Right ventricle myocardium inferior (tissue), 1 donor: ENCODE measurements at regions of chr9 and their contacts with region 1.

Region 1: DNA sequence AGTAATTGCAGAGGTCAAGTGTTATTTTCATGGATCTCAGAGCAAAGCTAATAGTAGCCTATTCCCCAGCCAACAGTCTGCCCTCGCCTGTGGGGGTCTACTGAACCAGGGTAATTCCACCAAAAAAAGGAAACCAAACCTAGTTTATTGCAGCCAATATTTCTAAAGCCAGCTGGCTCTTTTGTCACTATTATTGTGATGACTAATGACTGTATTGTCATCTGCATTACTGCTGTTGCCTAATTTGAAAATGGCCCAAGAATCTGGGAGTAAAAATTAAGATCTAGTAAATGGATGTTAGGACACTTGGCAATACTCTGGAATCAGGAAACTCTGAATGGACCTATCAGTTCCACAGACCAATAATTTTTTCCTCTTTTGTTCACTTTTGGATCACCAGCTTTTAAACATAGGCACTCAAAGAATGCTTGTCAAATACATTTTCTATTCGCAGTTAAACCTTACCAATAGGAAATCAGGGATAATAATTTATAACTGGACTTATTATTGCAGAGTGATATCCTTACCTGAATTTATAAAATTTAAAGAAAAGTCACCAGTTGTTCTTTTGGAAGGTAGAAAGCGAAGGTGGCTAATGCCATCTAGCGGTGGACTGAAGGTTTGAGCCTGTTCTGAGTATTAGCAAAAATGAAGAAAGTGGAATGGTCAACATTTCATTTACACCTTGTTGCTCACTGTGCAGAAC is 69.2 kb downstream of the SYK start:
- DNase-seq: no peak
- ATAC-seq: no peak

Region 2: DNA sequence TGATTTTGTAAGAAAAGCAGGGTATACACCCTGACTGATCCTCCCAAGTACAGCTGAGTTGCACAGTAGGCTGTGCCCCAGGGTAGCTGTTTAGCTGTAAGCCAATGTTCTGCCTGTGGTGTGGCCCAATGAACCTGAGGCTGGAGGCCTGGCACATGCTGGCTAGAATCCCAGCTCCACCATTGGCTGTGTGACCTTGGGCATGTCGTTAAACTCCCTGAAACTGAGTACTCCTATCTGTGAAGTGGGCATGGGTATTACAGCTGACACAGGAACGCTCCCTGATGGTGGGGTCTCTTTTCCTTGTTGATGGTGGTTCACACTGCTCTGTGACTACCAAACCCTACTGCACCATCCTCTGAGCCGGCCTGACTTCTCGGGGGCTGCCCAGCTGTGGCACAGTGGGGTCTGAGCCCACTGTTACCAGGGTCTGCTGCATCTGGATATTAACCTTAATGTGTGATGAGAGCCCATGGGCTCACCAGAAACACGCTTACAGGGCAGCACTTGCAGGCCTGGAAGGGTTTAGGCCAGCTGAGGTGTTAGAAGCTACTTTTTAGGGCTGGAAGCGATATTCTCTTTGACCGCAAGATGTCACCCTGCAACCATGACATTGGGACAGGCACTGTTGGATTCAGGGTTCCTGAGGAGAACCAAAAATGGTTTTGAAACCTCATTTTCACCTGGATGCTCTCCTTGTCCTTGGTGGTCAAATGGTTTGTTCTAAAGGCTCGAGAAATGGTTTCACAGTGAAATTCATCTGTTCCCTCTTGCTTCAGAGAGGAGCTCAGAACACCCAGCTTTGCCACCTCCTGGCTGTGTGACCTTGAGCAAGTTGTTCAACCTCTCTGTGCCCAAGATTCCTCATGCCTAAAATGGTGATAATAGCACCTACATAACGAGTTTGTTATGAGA is 1272.8 kb before region 1 on chr9:
- intact Hi-C with region 1: loop called (anchors 5 kb)
- DNase-seq: no peak
- ATAC-seq: peak; percentile 56

Region 3: DNA sequence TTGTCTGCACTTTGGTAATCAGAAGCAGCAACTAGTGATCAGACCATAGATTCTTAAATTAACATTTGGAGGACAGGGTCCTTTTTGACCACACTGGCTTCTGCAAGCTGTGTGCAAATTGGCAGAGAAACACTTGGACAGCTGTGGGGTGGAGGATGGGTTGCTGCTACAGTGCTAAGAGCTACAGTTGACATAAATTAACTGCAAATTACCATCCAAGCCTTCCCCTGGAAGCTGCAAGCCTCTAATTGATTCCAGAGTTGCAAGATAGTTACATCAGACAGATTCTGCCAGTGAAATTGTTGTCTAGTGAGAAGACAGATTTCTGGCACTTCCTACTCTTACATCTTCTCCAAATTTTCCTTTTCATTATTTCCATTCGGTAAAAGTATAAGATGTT is 745.8 kb before region 1 on chr9:
- intact Hi-C with region 1: loop called (anchors 5 kb)
- DNase-seq: no peak
- ATAC-seq: no peak

Region 4: DNA sequence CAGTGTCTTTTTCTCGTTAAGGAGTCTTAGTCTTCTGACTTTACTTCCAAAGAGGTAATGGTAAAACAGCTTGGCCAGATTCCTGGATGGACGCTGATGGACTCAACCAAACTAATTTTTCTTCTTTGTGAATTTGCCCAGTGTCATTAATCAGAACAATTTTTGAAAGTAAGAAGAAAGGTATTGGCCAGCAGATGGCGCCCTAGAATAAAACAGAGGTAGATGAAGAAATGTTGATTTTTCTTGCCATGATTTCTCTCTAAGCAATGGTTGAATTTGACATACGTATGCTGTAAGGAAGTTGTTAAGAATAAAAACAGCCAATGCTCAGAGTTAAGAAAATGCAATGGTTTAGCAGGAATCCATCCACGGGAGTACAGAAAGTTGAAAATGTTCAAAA is 728.2 kb before region 1 on chr9:
- intact Hi-C with region 1: loop called (anchors 2 kb)
- DNase-seq: no peak
- ATAC-seq: no peak

Region 5: DNA sequence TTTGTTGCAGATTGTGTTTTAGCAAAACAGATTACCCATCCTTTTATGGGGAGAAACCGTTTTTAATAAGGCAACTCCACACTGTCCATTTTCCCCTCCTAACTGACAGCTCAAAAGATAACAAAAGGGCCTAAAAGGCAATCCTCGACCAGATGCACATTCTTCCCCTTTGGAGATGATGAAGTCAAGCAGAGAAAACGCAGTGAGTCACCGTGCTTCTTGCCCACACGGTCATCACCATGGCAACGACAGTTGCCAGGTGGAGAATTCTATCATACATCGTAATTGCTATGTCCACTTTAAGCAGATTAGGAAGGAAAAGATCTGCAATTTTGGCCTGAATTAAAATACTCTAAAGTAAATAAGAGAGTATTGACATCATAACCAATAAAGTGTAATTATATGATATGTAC is 324.5 kb before region 1 on chr9:
- intact Hi-C with region 1: no loop called
- DNase-seq: no peak
- ATAC-seq: no peak

Region 6: DNA sequence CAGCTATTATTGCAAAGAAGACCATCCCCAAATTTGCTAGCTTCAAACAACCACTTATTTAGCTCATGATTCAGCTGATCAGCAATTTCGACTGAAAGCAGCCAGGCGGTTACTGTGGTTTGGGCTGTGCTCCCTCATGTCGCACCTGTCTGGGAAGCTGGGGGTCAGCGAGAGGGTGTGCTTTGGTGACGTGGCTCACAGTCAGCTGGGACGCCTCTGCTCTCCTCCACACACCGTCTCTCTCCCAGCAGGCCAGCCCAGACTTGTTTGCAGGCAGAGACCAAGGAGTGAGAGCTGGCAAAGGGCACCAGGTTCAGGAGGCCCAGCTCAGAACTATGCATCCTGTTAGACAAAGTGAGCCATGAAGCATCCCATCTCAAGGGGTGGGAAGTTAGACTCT is 71.8 kb after region 1 on chr9:
- intact Hi-C with region 1: no loop called
- DNase-seq: no peak
- ATAC-seq: no peak